ENCODE measurements at regions of chr9 and their contacts with region 1.

Region 1: DNA sequence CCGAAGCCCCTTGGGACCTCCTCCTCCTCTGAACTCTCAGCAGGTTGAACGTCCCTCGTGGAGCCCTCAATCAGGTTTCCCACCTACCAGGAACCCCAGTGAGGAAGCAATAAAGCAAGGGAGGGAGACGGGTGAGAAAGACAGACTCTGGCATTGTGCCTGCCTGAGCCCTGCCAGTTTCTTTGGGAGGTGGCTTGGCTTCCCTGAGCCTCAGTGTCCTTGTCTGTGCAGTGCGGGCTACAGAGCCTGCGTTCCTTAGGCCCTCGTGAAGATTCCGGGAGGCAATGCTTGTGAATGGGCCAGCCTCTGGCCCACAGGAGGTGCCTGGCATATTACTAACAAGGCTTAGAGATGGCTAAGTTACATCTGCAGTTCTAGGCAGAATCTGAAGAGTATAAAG is 11.9 kb downstream of the GTF3C5 start:
- DNase-seq: no peak
- CTCF ChIP-seq: no peak

Region 2: GRCh38 chr9:132609829-132610228 is 432.8 kb before region 1 on chr9:
- CTCF ChIA-PET with region 1: no interaction called
- POLR2A ChIA-PET with region 1: no interaction called
- DNase-seq: no peak
- CTCF ChIP-seq: no peak

Region 3: GRCh38 chr9:133030317-133031129 is 12.2 kb before region 1 on chr9 and contains the start of gene GTF3C5:
- CTCF ChIA-PET with region 1: interaction called, 22 read pairs
- POLR2A ChIA-PET with region 1: no interaction called
- DNase-seq: peak; percentile 99
- CTCF ChIP-seq: no peak

Measured in GM10248 (cell line).